CD4-positive, alpha-beta memory T cell (primary cell): ENCODE measurements at regions of chr14 and their contacts with region 1.

Region 1: DNA sequence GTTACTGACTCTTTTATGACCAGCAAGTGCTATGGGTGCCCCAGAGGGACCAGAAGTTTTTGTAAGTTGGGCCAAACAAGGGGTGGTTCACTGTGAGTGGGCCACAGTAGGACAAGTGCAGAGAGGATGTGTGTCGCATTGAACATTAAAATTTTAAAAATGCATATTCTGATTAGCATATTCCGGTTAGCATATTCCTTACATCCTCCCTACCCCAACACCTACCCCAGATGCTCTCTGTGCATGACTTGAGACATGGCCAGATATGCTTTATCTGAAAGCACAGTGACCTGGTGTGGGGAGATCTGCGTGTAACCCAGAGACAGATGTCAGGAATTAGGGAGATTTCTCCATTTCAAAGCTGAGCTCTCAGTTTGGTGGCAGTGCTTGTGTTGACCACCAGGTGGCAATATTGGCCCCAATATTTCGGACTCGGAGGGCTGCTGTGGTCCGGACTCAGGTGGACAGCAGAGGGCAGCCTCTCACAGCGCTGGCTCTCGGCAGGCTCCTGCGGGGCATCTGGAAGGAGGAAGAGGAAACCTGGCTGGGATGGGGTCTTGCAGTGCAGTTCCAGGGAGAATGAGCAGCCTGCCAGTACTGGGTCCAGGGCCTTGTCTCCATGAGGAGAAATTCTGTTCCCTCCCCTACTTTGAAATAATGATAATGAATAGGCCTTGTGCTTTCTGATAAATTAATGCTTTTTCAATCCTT is 1.6 kb upstream of the CEBPE start:
- DNase-seq: peak; percentile 68 to 76 (median 75)
- H3K4me3 ChIP-seq: peak overlapping the region in 1 of 2 donors; percentile 20
- H3K4me3 Mint-ChIP-seq: peak overlapping the region; percentile 40 to 90 (median 80)
- H3K27ac ChIP-seq: peak overlapping the region; percentile 49
- H3K27ac Mint-ChIP-seq: peak overlapping the region; percentile 86 to 95 (median 91)
- H3K4me1 ChIP-seq: peaks cover 57% of the 10 kb centered on the region
- H3K4me1 Mint-ChIP-seq: peaks cover 28 to 55% (median 34%) of the 10 kb centered on the region in 4 donors
- H3K27me3 ChIP-seq: no peaks in the 10 kb centered on the region
- H3K27me3 Mint-ChIP-seq: no peaks in the 10 kb centered on the region

Region 2: GRCh38 chr14:23025151-23025814 is 95.4 kb before region 1 on chr14:
- CTCF ChIA-PET with region 1: no interaction called
- POLR2A ChIA-PET with region 1: no interaction called
- intact Hi-C with region 1: no loop called
- DNase-seq: no peak
- H3K4me3 ChIP-seq: no peak overlapping the region
- H3K4me3 Mint-ChIP-seq: peak overlapping the region in 3 of 8 donors; percentile 49 to 62 (median 60)
- H3K27ac ChIP-seq: no peak overlapping the region
- H3K27ac Mint-ChIP-seq: peak overlapping the region in 5 of 7 donors; percentile 19 to 68 (median 61)
- H3K4me1 ChIP-seq: peaks cover 46% of the 10 kb centered on the region
- H3K4me1 Mint-ChIP-seq: peaks cover 32 to 53% (median 41%) of the 10 kb centered on the region in 4 donors
- H3K27me3 ChIP-seq: no peaks in the 10 kb centered on the region
- H3K27me3 Mint-ChIP-seq: no peaks in the 10 kb centered on the region

Region 3: GRCh38 chr14:23057757-23058653 is 62.7 kb before region 1 on chr14:
- CTCF ChIA-PET with region 1: no interaction called
- POLR2A ChIA-PET with region 1: no interaction called
- intact Hi-C with region 1: no loop called
- DNase-seq: peak; percentile 80 to 84 (median 82)
- H3K4me3 ChIP-seq: peak overlapping the region; percentile 36 to 89
- H3K4me3 Mint-ChIP-seq: peak overlapping the region; percentile 84 to 91 (median 88)
- H3K27ac ChIP-seq: peak overlapping the region; percentile 36
- H3K27ac Mint-ChIP-seq: peak overlapping the region in 6 of 7 donors; percentile 60 to 83 (median 82)
- H3K4me1 ChIP-seq: peaks cover 17% of the 10 kb centered on the region
- H3K4me1 Mint-ChIP-seq: peaks cover 11 to 21% (median 15%) of the 10 kb centered on the region in 4 donors
- H3K27me3 ChIP-seq: no peaks in the 10 kb centered on the region
- H3K27me3 Mint-ChIP-seq: peaks cover 0 to 1% of the 10 kb centered on the region in 2 donors

Region 4: DNA sequence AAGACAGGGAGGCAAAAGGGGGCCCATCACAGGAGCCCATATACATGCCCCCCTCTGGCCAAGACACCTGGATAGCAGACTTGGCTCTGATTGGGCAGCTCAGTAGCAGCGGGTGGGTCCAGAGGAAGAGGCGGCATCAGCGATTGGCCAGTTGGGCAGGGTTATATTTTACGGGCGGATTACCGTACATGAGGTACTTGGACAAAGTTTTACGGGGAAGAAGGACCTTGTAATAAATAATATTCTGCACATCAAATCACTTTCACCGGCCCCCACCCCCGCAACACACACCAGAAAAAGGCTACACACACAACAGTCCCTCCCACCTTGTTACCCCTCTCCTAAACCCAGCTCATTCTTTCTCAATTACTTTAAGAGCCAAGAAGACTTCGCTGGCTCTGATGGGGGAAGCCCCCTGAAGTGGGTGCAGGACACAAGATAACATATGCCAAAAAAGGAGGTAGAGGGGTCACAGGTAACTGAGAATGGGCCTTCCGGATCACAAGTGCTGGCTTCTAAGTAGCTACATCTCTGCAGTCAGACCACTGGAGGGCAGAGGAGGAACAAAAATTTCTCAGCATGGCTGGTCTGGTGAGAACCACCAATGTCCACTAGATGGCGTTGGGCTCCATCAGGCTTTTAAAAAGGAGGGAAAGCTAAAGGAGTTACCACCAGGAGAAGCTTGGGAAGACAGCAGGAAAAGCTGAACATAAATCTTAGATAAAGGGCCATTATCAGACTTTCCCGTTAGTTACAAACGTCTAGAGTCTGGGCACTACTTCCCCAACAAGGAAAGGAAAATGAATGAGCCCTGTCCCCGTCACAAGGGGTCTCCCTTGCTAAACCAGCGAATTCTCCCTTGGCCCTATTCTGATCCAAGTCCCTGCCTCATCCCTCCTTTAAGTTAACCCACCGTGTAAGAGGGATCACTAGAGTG is 52.0 kb before region 1 on chr14:
- CTCF ChIA-PET with region 1: interaction called, 14 read pairs
- POLR2A ChIA-PET with region 1: interaction called, 6 read pairs
- intact Hi-C with region 1: loop called (anchors 2 kb)
- DNase-seq: peak; percentile 77 to 81 (median 78)
- H3K4me3 ChIP-seq: no peak overlapping the region
- H3K4me3 Mint-ChIP-seq: peak overlapping the region in 7 of 8 donors; percentile 34 to 74 (median 61)
- H3K27ac ChIP-seq: no peak overlapping the region
- H3K27ac Mint-ChIP-seq: peak overlapping the region; percentile 34 to 93 (median 87)
- H3K4me1 ChIP-seq: peaks cover 28% of the 10 kb centered on the region
- H3K4me1 Mint-ChIP-seq: peaks cover 19 to 41% (median 32%) of the 10 kb centered on the region in 4 donors
- H3K27me3 ChIP-seq: no peaks in the 10 kb centered on the region
- H3K27me3 Mint-ChIP-seq: no peaks in the 10 kb centered on the region

Region 5: DNA sequence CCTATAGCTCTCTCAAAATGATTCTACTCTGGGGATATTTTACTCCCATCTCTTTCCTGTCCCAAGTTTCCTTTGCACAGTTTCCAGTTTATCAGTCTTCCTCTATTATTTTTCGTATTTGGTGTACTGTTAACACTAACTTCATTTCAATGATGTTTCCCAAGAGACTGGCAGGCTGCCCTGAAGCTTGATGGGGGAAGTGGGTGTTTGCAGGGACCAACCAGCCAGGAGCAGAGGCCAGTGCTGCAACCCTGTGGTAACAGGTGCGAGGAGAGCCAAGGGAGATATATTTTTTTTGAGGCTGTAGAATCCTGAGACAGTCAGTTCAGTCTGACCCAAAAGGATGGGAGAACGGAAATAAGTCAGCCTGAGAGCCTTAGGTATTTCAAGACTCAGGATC is 10.2 kb after region 1 on chr14:
- CTCF ChIA-PET with region 1: interaction called, 18 read pairs
- POLR2A ChIA-PET with region 1: no interaction called
- intact Hi-C with region 1: no loop called
- DNase-seq: no peak
- H3K4me3 ChIP-seq: no peak overlapping the region
- H3K4me3 Mint-ChIP-seq: no peak overlapping the region
- H3K27ac ChIP-seq: no peak overlapping the region
- H3K27ac Mint-ChIP-seq: no peak overlapping the region
- H3K4me1 ChIP-seq: no peaks in the 10 kb centered on the region
- H3K4me1 Mint-ChIP-seq: peaks cover 3 to 7% (median 5%) of the 10 kb centered on the region in 4 donors
- H3K27me3 ChIP-seq: no peaks in the 10 kb centered on the region
- H3K27me3 Mint-ChIP-seq: peaks cover 1 to 8% of the 10 kb centered on the region in 2 donors

Region 6: GRCh38 chr14:23177181-23177580 is 56.5 kb after region 1 on chr14:
- CTCF ChIA-PET with region 1: interaction called, 151 read pairs
- POLR2A ChIA-PET with region 1: interaction called, 9 read pairs
- intact Hi-C with region 1: no loop called
- DNase-seq: no peak
- H3K4me3 ChIP-seq: no peak overlapping the region
- H3K4me3 Mint-ChIP-seq: no peak overlapping the region
- H3K27ac ChIP-seq: no peak overlapping the region
- H3K27ac Mint-ChIP-seq: peak overlapping the region in 2 of 7 donors; percentile 32 to 65
- H3K4me1 ChIP-seq: peaks cover 5% of the 10 kb centered on the region
- H3K4me1 Mint-ChIP-seq: peaks cover 0 to 19% (median 9%) of the 10 kb centered on the region in 4 donors
- H3K27me3 ChIP-seq: peaks cover 7% of the 10 kb centered on the region
- H3K27me3 Mint-ChIP-seq: peaks cover 19 to 36% of the 10 kb centered on the region in 2 donors

Region 7: DNA sequence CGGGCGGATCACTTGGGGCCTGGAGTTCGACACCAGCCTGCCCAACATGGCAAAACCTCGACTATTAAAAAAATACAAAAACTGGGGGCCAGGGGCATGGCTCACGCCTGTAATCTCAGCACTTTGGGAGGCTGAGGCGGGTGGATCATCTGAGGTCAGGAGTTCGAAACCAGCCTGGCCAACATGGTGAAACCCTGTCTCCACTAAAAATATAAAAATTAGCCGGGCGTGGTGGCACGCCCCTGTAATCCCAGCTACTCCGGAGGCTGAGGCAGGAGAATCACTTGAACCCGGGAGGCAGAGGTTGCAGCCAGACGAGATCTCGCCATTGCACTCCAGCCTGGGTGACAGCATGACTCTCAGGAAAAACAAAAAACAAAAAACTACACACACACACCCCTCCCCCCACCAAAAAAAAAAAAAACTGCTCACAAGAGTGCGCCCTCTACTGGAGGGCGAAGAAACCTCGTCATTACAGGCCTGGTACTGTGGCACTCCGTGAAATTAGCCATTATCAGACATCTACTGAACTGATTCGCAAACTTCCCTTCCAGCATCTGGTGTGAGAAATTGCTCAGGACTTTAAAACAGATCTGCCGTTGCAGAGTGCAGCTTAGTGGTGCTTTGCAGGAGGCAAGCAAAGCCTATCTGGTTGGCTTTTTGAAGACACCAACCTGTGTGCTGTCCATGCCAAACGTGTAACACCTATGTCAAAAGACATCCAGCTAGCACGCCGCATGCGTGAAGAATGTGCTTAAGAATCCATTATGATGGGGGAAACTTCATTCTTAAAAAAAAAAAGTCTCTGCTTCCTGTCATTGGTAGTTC is 174.3 kb after region 1 on chr14:
- CTCF ChIA-PET with region 1: interaction called, 25 read pairs
- POLR2A ChIA-PET with region 1: no interaction called
- intact Hi-C with region 1: no loop called
- DNase-seq: peak; percentile 48 to 75 (median 74)
- H3K4me3 ChIP-seq: no peak overlapping the region
- H3K4me3 Mint-ChIP-seq: peak overlapping the region; percentile 18 to 77 (median 40)
- H3K27ac ChIP-seq: no peak overlapping the region
- H3K27ac Mint-ChIP-seq: peak overlapping the region; percentile 4 to 97 (median 80)
- H3K4me1 ChIP-seq: peaks cover 20% of the 10 kb centered on the region
- H3K4me1 Mint-ChIP-seq: peaks cover 11 to 20% (median 17%) of the 10 kb centered on the region in 4 donors
- H3K27me3 ChIP-seq: no peaks in the 10 kb centered on the region
- H3K27me3 Mint-ChIP-seq: no peaks in the 10 kb centered on the region

Region 8: GRCh38 chr14:23327947-23328744 is 207.4 kb after region 1 on chr14:
- CTCF ChIA-PET with region 1: interaction called, 11 read pairs
- POLR2A ChIA-PET with region 1: no interaction called
- intact Hi-C with region 1: loop called (anchors 2 kb)
- DNase-seq: peak; percentile 48 to 64 (median 60)
- H3K4me3 ChIP-seq: no peak overlapping the region
- H3K4me3 Mint-ChIP-seq: no peak overlapping the region
- H3K27ac ChIP-seq: no peak overlapping the region
- H3K27ac Mint-ChIP-seq: peak overlapping the region in 2 of 7 donors; percentile 28 to 60
- H3K4me1 ChIP-seq: peaks cover 9% of the 10 kb centered on the region
- H3K4me1 Mint-ChIP-seq: peaks cover 3 to 8% (median 5%) of the 10 kb centered on the region in 4 donors
- H3K27me3 ChIP-seq: no peaks in the 10 kb centered on the region
- H3K27me3 Mint-ChIP-seq: peaks cover 0 to 2% of the 10 kb centered on the region in 2 donors